HepG2 (cell line): ENCODE measurements at regions of chr21 and their contacts with region 1.

Region 1: DNA sequence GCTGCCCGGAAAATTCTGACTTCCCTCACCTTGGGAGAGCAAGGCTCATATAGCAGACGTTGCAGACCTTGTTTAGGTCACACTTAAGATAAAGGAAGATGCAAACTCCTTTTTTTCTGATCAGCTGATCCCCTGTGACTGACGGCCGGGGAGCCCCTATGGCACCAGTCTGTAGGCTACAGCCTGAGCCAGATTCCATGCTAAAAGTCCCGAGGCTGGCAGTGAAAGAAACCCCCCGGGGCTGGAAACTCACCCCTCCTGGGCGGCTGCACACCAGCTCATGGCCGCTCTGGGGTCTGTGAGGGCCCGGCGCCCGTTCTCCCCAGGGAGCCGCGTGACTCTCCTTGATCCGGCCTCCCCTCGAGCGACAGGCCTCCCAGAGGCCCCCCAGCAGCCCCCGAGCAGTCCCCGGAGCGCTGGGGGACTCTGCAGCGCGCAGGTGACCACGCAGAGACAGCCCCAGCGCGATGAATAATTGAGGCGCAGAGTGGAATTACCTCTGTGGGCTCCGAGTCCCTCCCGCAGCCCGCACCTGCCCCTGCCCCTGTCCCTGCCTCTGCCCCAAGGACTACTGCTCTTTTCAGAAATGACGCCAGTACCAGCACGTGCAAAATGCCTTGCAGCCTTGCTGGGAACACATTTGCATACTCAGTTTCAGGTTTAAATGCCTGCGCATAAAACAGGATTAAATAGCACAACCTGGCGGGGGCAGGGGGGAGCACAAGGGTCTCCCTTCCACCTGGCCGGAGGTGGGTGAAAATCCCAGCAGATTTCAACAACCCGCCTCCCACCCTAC is 62.6 kb upstream of the CLDN14 start:
- DNase-seq: no peak
- ATAC-seq: no peak
- H3K4me3 ChIP-seq: no peak overlapping the region
- H3K27ac ChIP-seq: no peak overlapping the region
- H3K4me1 ChIP-seq: peaks cover 21% of the 10 kb centered on the region
- H3K27me3 ChIP-seq: peaks cover 2 to 8% of the 10 kb centered on the region in 2 experiments; a peak in 2 of 5 replicates
- CTCF ChIP-seq: no peak
- EP300 ChIP-seq: no peak
- POLR2A ChIP-seq: no peak
- RAD21 ChIP-seq: no peak

Region 2: DNA sequence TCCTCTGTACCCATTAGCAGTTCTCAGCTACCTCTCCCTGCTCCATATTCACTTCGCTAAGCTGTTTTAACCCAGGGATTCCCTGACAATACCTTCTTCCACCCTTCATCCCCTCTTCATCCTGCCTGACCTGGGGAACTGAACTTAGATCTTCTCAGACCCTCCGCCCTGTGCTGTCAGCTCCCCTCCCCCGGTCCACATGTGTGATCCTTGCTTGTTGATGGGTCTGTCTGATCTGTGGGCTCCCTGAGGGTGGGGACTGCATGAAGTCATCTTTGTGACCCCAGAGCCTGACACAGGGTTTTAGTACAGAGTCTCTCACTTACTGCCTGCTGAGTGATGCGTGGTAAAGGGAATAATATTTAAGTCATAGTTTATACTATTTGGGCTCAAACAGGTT is 145.5 kb before region 1 on chr21:
- CTCF ChIA-PET with region 1: no interaction called
- POLR2A ChIA-PET with region 1: no interaction called
- in situ Hi-C with region 1: no loop called
- intact Hi-C with region 1: no loop called
- DNase-seq: no peak
- ATAC-seq: no peak
- H3K4me3 ChIP-seq: no peak overlapping the region
- H3K27ac ChIP-seq: no peak overlapping the region
- H3K4me1 ChIP-seq: no peaks in the 10 kb centered on the region
- H3K27me3 ChIP-seq: no peaks in the 10 kb centered on the region
- CTCF ChIP-seq: no peak
- EP300 ChIP-seq: no peak
- POLR2A ChIP-seq: no peak
- RAD21 ChIP-seq: no peak

Region 3: DNA sequence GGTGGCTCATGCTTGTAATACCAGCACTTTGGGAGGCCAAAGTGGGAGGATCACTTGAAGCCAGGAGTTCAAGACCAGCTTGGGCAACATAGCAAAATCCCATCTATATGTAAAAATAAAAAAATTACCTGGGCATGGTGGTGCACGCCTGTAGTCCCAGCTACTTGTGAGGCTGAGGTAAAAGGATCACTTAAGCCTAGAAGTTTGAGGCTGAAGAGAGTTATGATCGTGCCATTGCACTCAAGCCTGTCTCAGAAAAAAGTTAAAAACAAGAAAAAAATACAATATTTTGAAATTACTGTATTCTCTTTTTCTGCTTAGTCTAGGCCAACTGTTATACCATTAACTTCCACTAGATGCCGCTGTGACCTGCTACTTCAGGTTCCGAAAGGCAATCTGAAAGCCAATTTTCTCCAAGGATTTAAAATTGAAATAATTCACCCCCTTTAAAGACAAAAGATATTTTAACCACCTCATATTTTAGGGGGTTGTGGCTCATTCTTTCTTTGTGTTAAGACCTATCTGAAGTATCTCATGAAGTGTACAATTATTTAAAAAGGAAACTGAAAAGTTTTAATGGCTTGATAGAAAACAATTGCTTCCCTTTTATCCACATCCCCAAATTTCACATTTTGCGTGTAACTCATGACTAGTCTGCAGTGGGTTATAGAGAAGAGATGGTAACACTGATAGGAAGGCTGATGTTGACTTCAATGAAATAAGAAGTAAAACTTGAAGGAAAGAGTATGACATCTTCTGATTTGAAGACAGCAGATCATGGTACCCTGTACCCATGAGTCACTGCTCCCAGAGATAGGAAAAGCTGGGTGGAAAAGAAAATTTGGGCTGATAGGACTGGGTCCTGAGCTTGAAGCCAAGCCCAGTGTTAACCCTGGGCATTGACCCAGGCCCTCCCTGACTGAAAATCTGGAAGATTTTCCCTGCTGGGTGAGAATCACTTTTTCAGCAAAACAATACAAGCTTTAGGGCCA is 38.1 kb before region 1 on chr21:
- CTCF ChIA-PET with region 1: no interaction called
- POLR2A ChIA-PET with region 1: no interaction called
- in situ Hi-C with region 1: no loop called
- intact Hi-C with region 1: loop called (anchors 1 kb)
- DNase-seq: peak; percentile 27
- ATAC-seq: no peak
- H3K4me3 ChIP-seq: no peak overlapping the region
- H3K27ac ChIP-seq: no peak overlapping the region
- H3K4me1 ChIP-seq: peaks cover 49% of the 10 kb centered on the region
- H3K27me3 ChIP-seq: peaks cover 0 to 12% of the 10 kb centered on the region in 2 experiments; a peak in 3 of 5 replicates
- CTCF ChIP-seq: peak; percentile 70
- EP300 ChIP-seq: no peak
- POLR2A ChIP-seq: no peak
- RAD21 ChIP-seq: peak; percentile 26; the same call in 1 of the 2 replicates

Region 4: DNA sequence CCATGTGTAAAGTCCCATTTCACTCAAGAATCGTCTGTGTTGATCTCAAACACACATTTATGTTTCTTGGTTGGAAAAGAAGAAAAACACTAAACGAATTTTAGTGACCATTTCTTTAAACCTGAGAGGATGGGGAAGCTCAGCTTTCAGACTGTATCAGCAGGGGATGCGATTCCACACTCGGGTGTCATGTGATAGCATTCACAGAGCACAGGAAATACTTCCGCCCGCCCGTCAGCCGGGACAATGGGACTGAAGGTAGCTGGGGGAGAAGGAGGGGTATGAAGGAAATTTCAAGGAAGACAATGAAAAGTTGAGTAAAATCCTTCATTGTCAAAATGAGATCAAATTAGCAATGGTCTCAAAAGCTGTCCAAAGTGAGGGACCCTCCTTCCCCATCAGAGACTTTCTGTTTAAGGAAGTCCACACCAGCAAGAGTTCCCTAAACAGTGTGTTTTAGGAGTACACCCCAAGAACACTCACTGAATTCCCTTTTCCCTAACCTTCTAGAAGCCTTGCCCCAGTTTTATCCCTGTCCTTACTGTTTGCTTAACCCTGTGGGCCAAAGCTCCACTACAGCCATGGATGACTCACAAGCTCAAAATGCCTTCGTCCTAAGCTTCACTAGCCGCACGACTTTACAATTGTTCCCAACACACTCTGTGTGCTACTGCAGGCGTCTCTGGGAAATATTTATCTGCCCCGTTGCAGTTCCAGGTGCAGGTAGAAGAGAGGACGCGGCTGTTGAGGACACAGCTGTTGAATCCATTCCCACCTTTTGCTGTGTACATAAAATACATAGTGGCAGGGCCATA is 105.0 kb after region 1 on chr21:
- CTCF ChIA-PET with region 1: no interaction called
- POLR2A ChIA-PET with region 1: no interaction called
- in situ Hi-C with region 1: no loop called
- intact Hi-C with region 1: no loop called
- DNase-seq: peak; percentile 68
- ATAC-seq: peak; percentile 98
- H3K4me3 ChIP-seq: no peak overlapping the region
- H3K27ac ChIP-seq: no peak overlapping the region
- H3K4me1 ChIP-seq: peaks cover 28% of the 10 kb centered on the region
- H3K27me3 ChIP-seq: no peaks in the 10 kb centered on the region; a peak in 1 of 5 replicates
- CTCF ChIP-seq: no peak
- EP300 ChIP-seq: no peak
- POLR2A ChIP-seq: no peak
- RAD21 ChIP-seq: no peak